Naive thymus-derived CD8-positive, alpha-beta T cell (primary cell): ENCODE measurements at regions of chr11 and their contacts with region 1.

Region 1: GRCh38 chr11:9314291-9315036 is at the start of gene TMEM41B:
- DNase-seq: peak; percentile 98 to 100 (median 100)
- ATAC-seq: peak; percentile 92 to 93
- H3K4me3 Mint-ChIP-seq: peak within 1 kb of the TSS; percentile 95 to 100 (median 100)
- H3K27ac Mint-ChIP-seq: peak within 1 kb of the TSS; percentile 97 to 100 (median 99)
- H3K4me1 Mint-ChIP-seq: peaks cover 17 to 58% (median 47%) of the 10 kb centered on the region in 4 donors
- H3K27me3 Mint-ChIP-seq: peaks cover 0 to 4% (median 0%) of the 10 kb centered on the region in 5 donors
- polyA plus RNA-seq, gene TMEM41B: 7.4 to 16.3 (median 7.5) TPM

Region 2: DNA sequence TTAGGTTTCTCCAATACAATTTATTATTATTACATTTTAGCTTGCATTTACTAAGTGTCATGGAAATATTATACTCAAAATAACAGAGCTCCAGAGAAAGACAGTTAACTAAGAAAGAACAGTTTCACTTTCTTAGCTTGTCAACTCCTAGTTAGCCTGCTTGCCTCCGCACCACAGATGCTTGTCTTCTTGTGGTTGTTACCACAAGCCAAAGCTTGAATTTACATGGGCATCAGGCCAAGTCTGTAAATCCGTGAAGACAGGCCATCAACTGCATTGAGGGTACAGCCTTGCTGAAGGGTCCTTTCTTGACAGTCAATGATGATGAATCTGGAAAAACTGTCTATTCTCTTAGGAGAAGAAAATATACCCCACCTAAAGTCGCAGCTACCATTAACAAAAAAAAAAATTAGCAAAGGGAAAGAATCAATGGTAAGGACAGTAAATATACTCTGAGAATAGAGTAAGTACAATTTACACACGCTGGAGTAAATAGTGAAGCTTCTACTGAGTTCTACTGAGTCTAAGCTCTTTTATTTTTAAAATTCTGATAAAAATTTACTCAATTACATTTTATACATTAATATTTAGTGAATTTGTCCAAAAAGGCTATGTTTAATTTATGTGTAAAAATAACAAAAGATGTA is 33.7 kb before region 1 on chr11:
- POLR2A ChIA-PET with region 1: interaction called, 23 read pairs
- DNase-seq: peak in 9 of 10 donors; percentile 33 to 82 (median 71)
- ATAC-seq: peak; percentile 92 to 97
- H3K4me3 Mint-ChIP-seq: peak overlapping the region; percentile 33 to 73 (median 71)
- H3K27ac Mint-ChIP-seq: peak overlapping the region; percentile 61 to 91 (median 84)
- H3K4me1 Mint-ChIP-seq: peaks cover 5 to 21% (median 17%) of the 10 kb centered on the region in 4 donors
- H3K27me3 Mint-ChIP-seq: no peaks in the 10 kb centered on the region

Region 3: GRCh38 chr11:9302448-9302847 is 12.0 kb before region 1 on chr11:
- POLR2A ChIA-PET with region 1: no interaction called
- DNase-seq: no peak
- ATAC-seq: no peak
- H3K4me3 Mint-ChIP-seq: no peak overlapping the region
- H3K27ac Mint-ChIP-seq: peak overlapping the region in 1 of 10 donors; percentile 57
- H3K4me1 Mint-ChIP-seq: peaks cover 11 to 31% (median 19%) of the 10 kb centered on the region in 4 donors
- H3K27me3 Mint-ChIP-seq: no peaks in the 10 kb centered on the region

Region 4: GRCh38 chr11:9363954-9364912 is 49.8 kb after region 1 on chr11:
- POLR2A ChIA-PET with region 1: interaction called, 13 read pairs
- DNase-seq: peak; percentile 50 to 80 (median 62)
- ATAC-seq: peak; percentile 91 to 95
- H3K4me3 Mint-ChIP-seq: peak overlapping the region; percentile 80 to 91 (median 84)
- H3K27ac Mint-ChIP-seq: peak overlapping the region; percentile 78 to 94 (median 88)
- H3K4me1 Mint-ChIP-seq: peaks cover 0 to 31% (median 9%) of the 10 kb centered on the region in 4 donors
- H3K27me3 Mint-ChIP-seq: no peaks in the 10 kb centered on the region

Region 5: DNA sequence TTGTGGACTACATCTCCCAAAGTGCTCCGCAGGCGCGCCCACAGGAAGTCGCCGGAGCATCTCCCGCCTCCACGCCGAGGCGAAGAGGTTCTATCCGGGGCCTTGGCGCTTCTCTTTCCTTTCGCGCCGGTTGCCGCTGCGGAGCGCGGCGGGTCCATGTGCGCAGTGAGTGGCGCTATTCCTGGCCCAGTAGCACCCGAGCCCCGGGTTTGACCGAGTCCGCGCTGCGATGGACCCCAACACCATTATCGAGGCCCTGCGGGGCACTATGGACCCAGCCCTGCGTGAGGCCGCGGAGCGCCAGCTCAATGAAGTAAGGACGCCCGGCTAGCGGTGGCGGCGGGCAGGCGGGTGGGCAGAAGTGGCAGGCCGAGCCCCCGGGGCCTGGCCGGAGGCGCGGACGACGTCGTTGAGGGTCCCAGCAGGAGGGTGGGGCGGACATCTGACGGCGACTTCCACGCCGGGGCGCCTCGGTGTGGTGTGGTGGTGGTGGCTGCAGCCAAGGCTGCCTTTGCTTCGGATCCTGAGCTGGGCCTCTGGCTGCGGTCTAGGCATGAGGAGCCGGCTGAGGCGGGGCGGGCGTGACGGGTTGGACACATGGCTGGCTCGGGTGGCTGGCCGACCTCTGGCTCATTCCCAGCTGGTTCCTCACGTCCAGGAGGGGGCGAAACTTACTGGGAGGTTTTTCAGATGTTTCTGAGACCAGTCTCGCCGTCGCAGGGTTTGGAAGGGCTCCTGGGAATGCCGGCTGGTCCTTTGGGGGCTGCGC is 70.3 kb after region 1 on chr11 and contains the start of gene IPO7:
- POLR2A ChIA-PET with region 1: interaction called, 17 read pairs
- DNase-seq: peak; percentile 75 to 91 (median 84)
- ATAC-seq: peak; percentile 98 to 99
- H3K4me3 Mint-ChIP-seq: peak within 1 kb of the TSS; percentile 90 to 97 (median 96)
- H3K27ac Mint-ChIP-seq: peak within 1 kb of the TSS; percentile 81 to 98 (median 94)
- H3K4me1 Mint-ChIP-seq: peaks cover 10 to 41% (median 39%) of the 10 kb centered on the region in 4 donors
- H3K27me3 Mint-ChIP-seq: no peaks in the 10 kb centered on the region
- polyA plus RNA-seq, gene IPO7: 3.7 to 11.2 (median 5.9) TPM